ENCODE measurements at regions of chr2 and their contacts with region 1.

Region 1: DNA sequence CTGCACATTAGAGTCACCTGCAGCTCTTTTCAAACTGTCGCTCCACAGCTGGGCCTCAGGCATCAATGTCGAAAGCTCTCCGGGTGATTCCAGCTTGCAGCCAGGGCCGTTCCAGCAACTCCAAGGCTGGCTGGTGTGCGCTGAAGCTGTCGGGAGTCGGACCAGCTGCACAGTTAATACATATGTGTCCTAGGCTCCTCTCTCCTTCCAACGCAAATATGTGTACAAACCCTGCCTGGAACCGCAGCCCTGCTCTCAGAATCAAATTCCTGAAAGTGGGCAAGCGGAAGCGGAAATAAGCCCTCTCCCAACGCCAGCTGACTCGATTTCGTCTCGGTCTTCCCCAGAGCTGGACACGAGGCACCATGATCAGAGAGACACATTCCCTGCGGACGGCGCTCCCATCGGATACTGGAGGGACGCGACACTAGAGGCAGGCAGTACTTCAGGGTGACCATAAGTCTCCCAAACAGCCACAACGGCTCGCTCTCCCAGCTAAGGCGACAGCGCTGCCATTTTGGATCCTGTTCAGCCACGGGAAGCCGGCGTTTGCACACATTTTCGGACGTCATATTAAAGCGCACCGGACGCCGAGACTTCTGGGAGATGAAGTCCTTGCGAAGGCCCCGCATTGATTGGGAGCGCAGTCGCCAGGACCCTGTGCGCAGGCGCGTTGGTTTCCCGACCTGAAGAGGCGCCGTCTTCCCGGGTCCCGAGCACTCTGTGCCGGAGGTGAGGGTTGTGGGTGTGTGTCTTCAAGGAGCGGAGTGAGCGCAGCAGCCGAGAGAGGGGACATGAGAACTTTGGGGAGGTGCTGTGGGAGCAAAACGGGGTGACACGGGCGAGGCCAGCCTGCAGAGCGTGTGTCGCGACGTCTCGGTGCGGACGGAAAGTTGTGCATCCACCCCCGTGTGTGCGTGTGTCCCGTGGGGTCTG is at the start of gene ZNF2:
- H3K4me3 Mint-ChIP-seq: peak within 1 kb of the TSS; percentile 97
- H3K27ac Mint-ChIP-seq: peak within 1 kb of the TSS; percentile 92
- H3K4me1 Mint-ChIP-seq: peaks cover 23% of the 10 kb centered on the region
- H3K27me3 Mint-ChIP-seq: no peaks in the 10 kb centered on the region

Region 2: GRCh38 chr2:95121407-95122196 is 43.8 kb before region 1 on chr2 and contains the start of gene MRPS5:
- intact Hi-C with region 1: loop called (anchors 1 kb)
- H3K4me3 Mint-ChIP-seq: peak within 1 kb of the TSS; percentile 99
- H3K27ac Mint-ChIP-seq: peak within 1 kb of the TSS; percentile 95
- H3K4me1 Mint-ChIP-seq: peaks cover 38% of the 10 kb centered on the region
- H3K27me3 Mint-ChIP-seq: peaks cover 2% of the 10 kb centered on the region

Region 3: GRCh38 chr2:95207111-95207961 is 41.9 kb after region 1 on chr2 and contains the start of gene ZNF892:
- intact Hi-C with region 1: loop called (anchors 1 kb)
- H3K4me3 Mint-ChIP-seq: peak within 1 kb of the TSS; percentile 90
- H3K27ac Mint-ChIP-seq: peak within 1 kb of the TSS; percentile 91
- H3K4me1 Mint-ChIP-seq: peaks cover 12% of the 10 kb centered on the region
- H3K27me3 Mint-ChIP-seq: peaks cover 6% of the 10 kb centered on the region

Measured in dendritic cell treated with granulocyte-macrophage colony-stimulating factor and Interleukin-4, amounts not matched to agents 40 ng/mL and 50 ng/mL, for 4 days (primary cell).